Breast epithelium (tissue), 4 donors: ENCODE measurements at regions of chr14 and their contacts with region 1.

Region 1: GRCh38 chr14:91185721-91186120 is 58.8 kb downstream of the GPR68 start:
- DNase-seq: no peak
- H3K4me3 ChIP-seq: no peak overlapping the region
- H3K27ac ChIP-seq: no peak overlapping the region
- H3K4me1 ChIP-seq: no peaks in the 10 kb centered on the region
- H3K27me3 ChIP-seq: no peaks in the 10 kb centered on the region
- CTCF ChIP-seq: no peak
- POLR2A ChIP-seq: no peak

Region 2: DNA sequence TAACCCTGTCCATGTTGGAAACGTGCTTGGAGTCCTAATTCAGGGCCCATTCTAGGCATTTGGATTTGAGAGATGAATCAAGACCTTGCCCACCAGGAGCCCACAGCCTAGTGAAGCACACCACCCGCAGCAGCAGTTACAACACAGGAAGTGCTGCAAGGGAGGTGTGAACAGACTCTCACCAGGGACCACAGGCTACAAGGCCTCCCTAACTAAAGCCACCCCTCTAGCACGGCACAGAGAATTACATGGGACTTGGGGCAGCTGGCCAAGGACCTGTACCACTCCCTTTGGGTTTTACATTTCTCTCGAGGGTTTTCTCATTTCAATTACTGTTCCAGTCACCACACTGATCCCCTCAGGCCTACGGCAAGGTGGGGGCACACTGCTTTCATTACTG is 1719.2 kb before region 1 on chr14:
- intact Hi-C with region 1: loop called (anchors 10 kb)
- DNase-seq: no peak
- H3K4me3 ChIP-seq: no peak overlapping the region
- H3K27ac ChIP-seq: no peak overlapping the region
- H3K4me1 ChIP-seq: no peaks in the 10 kb centered on the region
- H3K27me3 ChIP-seq: no peaks in the 10 kb centered on the region
- CTCF ChIP-seq: no peak
- POLR2A ChIP-seq: no peak

Region 3: GRCh38 chr14:90959344-90959743 is 226.4 kb before region 1 on chr14:
- intact Hi-C with region 1: no loop called
- DNase-seq: no peak
- H3K4me3 ChIP-seq: no peak overlapping the region
- H3K27ac ChIP-seq: no peak overlapping the region
- H3K4me1 ChIP-seq: no peaks in the 10 kb centered on the region
- H3K27me3 ChIP-seq: no peaks in the 10 kb centered on the region
- CTCF ChIP-seq: no peak
- POLR2A ChIP-seq: no peak

Region 4: DNA sequence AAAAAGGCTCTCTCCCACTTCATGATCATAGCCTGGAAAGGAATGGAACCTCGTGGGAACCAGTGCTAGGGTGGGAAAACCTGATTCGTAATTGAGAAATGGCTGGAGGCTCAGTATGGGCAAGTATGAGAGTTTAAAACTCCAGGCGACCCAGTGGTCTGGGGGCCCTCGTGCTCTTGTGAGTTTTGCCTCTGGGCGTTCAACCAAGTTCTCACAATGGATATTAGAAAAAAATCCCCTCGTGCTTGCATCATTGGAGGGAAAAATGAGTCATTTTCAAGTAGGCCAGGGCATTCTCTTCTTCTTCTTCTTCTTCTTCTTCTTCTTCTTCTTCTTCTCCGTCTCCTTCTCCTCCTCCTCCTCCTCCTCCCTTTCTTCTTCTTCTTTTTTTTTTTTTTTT is 19.7 kb after region 1 on chr14:
- intact Hi-C with region 1: loop called (anchors 1 kb)
- DNase-seq: no peak
- H3K4me3 ChIP-seq: no peak overlapping the region
- H3K27ac ChIP-seq: no peak overlapping the region
- H3K4me1 ChIP-seq: no peaks in the 10 kb centered on the region
- H3K27me3 ChIP-seq: no peaks in the 10 kb centered on the region
- CTCF ChIP-seq: no peak
- POLR2A ChIP-seq: no peak